ENCODE measurements at regions of chr22 and their contacts with region 1.

Region 1: DNA sequence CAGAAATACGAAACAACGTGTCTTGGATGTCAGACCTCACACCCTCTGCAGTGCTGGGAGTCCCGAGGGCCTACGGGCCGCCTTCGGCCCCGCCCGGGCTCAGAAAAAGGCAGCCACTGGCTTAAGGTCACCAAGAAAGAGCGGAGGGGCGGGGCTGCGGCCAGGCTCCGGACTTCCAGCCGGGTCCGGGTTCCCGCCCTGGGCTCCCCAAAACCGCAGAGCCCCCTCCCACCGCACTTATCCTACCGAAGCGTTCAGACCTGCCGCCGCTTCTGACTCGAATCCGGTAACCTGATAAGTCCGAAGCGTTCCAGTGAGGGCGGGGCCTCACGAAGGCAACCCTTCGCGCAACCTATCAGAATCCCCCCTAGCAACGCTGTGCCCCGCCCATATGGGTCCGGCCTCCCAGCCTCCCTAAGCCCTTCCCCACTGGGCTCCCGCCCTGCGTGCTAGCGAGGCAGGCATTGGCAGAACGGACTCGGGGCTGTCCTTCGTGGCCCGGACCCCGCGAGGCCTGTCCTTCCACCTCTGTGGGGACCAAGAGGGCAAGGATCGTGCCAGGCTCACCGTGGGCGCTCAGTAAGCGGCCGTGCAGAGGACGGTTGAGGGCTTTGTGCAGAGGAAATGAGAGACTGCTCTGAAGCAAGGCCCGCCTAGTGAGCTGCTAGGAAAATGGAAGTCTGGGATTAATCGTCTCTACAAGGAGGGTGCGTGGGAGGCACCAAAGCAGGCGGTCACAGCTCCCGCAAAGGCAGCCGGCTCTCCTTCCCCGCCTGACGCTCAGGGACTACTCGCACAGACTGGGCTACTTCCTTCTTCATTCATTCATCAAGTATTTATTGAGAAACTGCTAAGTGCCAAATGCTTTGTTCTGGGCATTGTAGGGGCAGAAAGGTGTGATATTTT is at the start of gene NAGA:
- DNase-seq: peak; percentile 97
- H3K4me3 Mint-ChIP-seq: peak within 1 kb of the TSS; percentile 88
- H3K27ac Mint-ChIP-seq: peak within 1 kb of the TSS; percentile 89
- H3K4me1 Mint-ChIP-seq: peaks cover 32% of the 10 kb centered on the region
- H3K27me3 Mint-ChIP-seq: no peaks in the 10 kb centered on the region
- total RNA-seq, gene NAGA: 28.9 to 30.5 TPM

Region 2: DNA sequence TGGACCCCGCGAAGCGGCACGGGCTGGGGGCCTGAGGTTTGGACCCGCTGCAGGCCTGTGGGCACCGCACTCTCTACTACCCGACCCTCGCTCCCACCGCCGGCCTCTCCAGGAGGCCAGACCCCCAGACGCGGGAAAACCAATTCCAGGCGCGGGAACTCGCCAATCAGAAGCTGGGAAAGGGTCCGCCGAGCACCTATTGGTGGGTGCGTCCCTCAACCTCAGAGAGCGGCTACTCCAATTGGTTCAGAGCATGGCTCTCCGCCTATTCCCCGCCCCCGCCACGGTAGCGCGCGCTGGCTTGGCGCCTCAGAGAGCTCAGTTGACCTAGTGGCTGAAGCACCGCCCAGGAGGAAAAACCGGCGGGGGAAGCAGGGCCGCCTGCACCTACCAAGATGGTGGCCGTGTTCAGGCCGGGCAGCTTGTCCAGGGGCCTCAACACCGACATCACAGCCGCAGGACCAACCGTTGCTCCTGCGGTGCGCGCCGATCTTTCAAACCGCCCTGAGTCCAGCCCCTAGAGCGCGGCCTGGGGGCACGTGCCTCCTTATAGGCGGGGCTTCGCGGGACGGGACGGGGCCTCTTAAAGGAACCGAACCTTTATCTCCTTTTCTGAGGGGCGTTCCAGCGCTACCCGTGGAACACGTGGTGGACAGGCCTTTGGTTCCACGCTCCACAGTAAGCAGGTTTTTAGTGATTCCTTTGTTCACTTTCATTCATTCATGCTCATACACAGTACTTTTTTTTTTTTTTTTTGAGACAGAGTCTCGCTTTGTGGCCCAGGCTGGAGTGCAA is 123.9 kb before region 1 on chr22 and contains the start of gene CENPM:
- CTCF ChIA-PET with region 1: no interaction called
- POLR2A ChIA-PET with region 1: interaction called, 4 read pairs
- intact Hi-C with region 1: loop called (anchors 5 kb)
- DNase-seq: peak; percentile 96
- H3K4me3 Mint-ChIP-seq: peak within 1 kb of the TSS; percentile 98
- H3K27ac Mint-ChIP-seq: peak within 1 kb of the TSS; percentile 87
- H3K4me1 Mint-ChIP-seq: peaks cover 52% of the 10 kb centered on the region
- H3K27me3 Mint-ChIP-seq: no peaks in the 10 kb centered on the region
- total RNA-seq, gene CENPM: 99.9 to 106 TPM

Region 3: DNA sequence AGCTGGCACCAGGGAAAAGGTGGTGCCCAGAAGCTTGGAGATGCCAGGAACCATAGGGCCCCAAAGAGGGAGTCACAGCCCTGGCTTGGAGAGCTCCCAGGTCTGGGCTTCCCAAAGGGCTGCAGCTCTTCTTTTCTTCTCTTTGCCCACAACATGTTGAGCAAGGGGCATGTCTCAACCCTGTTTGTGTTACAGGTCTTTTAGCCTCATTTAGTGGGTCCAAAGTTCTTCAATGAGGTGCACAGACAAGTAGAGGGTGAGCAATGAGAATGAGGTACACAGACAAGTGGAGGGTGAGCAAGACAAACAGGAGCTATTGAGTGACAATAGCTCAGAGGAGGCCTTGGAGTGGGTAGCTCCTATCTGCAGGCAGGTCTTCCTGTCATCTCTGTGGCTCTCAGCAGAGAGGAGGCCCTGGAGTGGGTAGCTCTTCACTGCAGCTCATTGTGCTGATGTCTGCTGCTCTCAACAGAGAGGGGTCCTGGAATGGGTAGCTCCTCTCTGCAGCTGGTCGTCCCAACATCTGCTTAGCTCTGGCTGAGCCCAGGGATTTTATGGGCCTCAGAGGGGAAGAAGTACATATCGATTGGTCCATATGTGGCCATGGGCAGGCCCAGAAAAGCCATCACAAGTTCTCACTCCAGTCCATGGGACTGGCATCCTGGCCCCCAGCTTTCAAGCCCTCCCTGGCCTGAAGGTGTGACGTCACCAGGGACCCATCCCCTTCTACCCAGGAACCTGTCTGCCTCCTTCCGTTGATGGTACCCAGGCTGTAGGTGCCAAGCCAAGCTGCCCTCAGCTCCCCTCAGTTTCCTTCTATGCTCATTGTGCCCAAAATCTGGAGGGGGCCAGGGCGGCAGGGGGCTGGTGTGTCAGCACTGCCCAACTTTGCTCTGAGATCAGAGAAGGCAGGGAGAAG is 37.2 kb before region 1 on chr22:
- CTCF ChIA-PET with region 1: interaction called, 5 read pairs
- POLR2A ChIA-PET with region 1: interaction called, 7 read pairs
- intact Hi-C with region 1: loop called (anchors 5 kb)
- DNase-seq: peak; percentile 13
- H3K4me3 Mint-ChIP-seq: no peak overlapping the region
- H3K27ac Mint-ChIP-seq: no peak overlapping the region
- H3K4me1 Mint-ChIP-seq: peaks cover 19% of the 10 kb centered on the region
- H3K27me3 Mint-ChIP-seq: no peaks in the 10 kb centered on the region

Measured in activated CD4-positive, alpha-beta memory T cell treated with anti-CD3 and anti-CD28 coated beads for 36 hours (primary cell).